Esophagus muscularis mucosa (tissue), 4 donors: ENCODE measurements at regions of chr6 and their contacts with region 1.

Region 1: GRCh38 chr6:145734486-145735355 is 599 bp downstream of the EPM2A start:
- DNase-seq: peak; percentile 95
- H3K4me3 ChIP-seq: peak overlapping the region; percentile 64 to 88 (median 76)
- H3K27ac ChIP-seq: peak overlapping the region; percentile 96 to 99 (median 98)
- H3K4me1 ChIP-seq: peaks cover 11 to 49% (median 45%) of the 10 kb centered on the region in 4 donors
- H3K27me3 ChIP-seq: no peaks in the 10 kb centered on the region
- CTCF ChIP-seq: no peak
- EP300 ChIP-seq: peak; percentile 24
- POLR2A ChIP-seq: peak; percentile 30

Region 2: DNA sequence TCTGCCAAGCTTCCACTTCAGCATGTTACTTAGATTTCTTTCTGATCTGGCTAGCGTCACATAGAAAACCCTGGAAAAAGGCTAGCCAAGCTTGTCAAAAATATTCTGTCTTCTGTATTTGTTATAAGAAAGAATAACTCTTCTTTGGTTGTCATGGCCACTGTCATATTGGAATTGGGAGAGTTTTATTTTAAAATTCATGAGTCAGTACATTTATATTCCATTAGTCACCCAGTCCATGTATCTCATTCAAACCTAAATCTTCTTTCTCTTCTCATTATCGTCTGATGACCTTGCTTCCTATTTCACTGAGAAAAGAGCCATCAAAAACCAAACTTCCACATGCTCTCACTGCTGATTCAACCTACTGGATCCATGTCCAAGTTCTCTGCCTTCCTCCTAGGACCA is 65.1 kb before region 1 on chr6:
- intact Hi-C with region 1: no loop called
- DNase-seq: no peak
- H3K4me3 ChIP-seq: no peak overlapping the region
- H3K27ac ChIP-seq: peak overlapping the region; percentile 4 to 21 (median 19)
- H3K4me1 ChIP-seq: peaks cover 11 to 24% (median 17%) of the 10 kb centered on the region in 4 donors
- H3K27me3 ChIP-seq: no peaks in the 10 kb centered on the region
- CTCF ChIP-seq: no peak
- EP300 ChIP-seq: no peak
- POLR2A ChIP-seq: no peak

Region 3: GRCh38 chr6:145814501-145815308 is 80.0 kb after region 1 on chr6 and contains the start of gene FBXO30:
- intact Hi-C with region 1: loop called (anchors 5 kb)
- DNase-seq: peak; percentile 98
- H3K4me3 ChIP-seq: peak within 1 kb of the TSS; percentile 75 to 89 (median 81)
- H3K27ac ChIP-seq: peak within 1 kb of the TSS; percentile 93 to 97 (median 96)
- H3K4me1 ChIP-seq: peaks cover 22 to 43% (median 31%) of the 10 kb centered on the region in 4 donors
- H3K27me3 ChIP-seq: no peaks in the 10 kb centered on the region
- CTCF ChIP-seq: peak in 1 of 3 experiments; percentile 33
- EP300 ChIP-seq: no peak
- POLR2A ChIP-seq: peak; percentile 54
- total RNA-seq, gene FBXO30: 47.1 to 92.2 (median 69.3) TPM

Region 4: GRCh38 chr6:145887969-145888368 is 153.2 kb after region 1 on chr6:
- intact Hi-C with region 1: loop called (anchors 5 kb)
- DNase-seq: no peak
- H3K4me3 ChIP-seq: no peak overlapping the region
- H3K27ac ChIP-seq: peak overlapping the region; percentile 40 to 66 (median 62)
- H3K4me1 ChIP-seq: peaks cover 6 to 55% (median 41%) of the 10 kb centered on the region in 4 donors
- H3K27me3 ChIP-seq: no peaks in the 10 kb centered on the region
- CTCF ChIP-seq: peak; percentile 65 to 87 (median 77)
- EP300 ChIP-seq: no peak
- POLR2A ChIP-seq: no peak

Region 5: DNA sequence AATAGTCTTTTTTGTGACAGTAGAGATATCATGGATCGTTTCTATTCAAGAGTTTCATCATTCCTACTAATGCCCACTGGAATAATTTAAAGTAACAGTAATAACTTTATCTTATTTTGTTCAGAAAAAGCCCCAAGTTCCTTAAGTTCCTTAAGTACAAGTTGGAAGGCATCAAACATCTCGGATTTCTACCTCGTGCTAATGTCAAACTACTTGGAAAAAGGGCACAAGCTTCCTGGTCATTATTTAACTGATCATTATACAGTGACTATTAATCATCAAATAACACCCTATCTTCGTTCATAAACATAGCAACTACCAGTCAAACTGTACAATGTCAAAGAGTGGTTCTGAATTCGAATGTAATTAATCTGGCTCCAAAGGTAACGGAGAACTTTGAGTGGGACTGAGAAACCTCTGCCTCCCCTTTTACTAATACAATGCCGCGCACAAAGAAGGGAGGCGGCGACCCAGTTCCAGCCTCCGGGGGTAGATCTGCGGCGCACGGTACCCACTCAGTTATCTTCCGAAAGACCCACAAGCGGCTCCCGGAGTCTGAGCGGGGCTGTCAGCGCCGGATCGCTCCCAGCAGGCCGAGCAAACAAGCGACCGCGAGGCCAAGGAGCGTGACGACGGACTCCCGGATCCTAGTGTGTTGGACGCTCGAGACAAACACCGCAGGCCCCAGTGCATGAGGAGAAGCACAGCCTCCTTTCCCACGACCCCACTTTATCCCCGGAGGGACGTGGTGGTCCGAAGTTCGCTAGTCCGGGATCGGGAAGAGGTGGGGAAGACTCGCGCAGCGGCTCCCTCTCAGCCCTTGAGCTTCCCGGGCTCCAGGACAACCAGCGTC is 228.7 kb after region 1 on chr6:
- intact Hi-C with region 1: loop called (anchors 10 kb)
- DNase-seq: peak; percentile 91
- H3K4me3 ChIP-seq: peak overlapping the region; percentile 70 to 83 (median 77)
- H3K27ac ChIP-seq: peak overlapping the region; percentile 85 to 92 (median 90)
- H3K4me1 ChIP-seq: peaks cover 30 to 53% (median 40%) of the 10 kb centered on the region in 4 donors
- H3K27me3 ChIP-seq: no peaks in the 10 kb centered on the region
- CTCF ChIP-seq: no peak
- EP300 ChIP-seq: no peak
- POLR2A ChIP-seq: no peak